Heart right ventricle (tissue), 16 donors: ENCODE measurements at regions of chr6 and their contacts with region 1.

Region 1: DNA sequence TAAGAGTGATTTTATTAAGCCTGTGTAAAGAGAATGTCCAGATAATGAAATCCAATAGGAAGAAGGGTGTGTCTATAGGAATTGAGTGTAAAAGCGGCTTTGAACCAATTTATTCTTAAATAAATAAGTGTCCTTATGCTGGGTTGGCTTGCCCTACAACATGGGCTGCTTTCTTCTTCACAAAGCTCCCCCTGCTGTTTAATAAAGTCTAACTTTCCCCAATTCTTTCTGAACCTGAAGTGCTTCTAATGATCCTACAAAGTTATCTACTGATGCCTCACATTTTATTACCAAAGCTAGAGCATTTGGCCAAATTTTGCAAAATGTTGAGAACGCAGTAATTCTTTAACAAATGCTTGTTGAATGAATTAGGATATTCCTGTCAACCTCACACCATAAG is 36.3 kb upstream of the SIRT5 start:
- DNase-seq: no peak
- ATAC-seq: peak in 7 of 8 donors; percentile 69 to 84 (median 75)
- H3K4me3 ChIP-seq: no peak overlapping the region
- H3K27ac ChIP-seq: peak overlapping the region in 7 of 10 donors; percentile 24 to 71 (median 34)
- H3K4me1 ChIP-seq: peaks cover 0 to 33% (median 12%) of the 10 kb centered on the region in 9 donors
- H3K27me3 ChIP-seq: no peaks in the 10 kb centered on the region
- CTCF ChIP-seq: peak; percentile 28 to 73 (median 59)

Region 2: DNA sequence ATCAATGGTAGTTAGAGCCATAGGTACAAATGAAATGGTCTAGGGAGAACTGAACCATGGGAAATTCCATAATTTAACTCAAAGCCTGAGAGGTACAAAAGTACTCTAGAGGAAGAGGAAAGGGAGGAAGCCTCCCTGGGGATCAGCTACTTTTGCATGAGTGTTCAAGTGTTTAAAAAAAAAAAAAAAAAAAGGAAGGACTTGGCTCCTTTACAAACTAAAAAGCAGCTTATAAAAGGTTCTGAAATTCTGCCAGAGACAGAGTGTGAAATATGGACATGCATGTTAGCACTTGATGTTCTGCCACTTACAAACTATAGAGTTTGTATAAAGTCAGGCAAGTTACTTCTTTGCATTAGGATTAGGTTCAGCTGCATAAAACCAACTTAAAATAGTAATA is 499.8 kb before region 1 on chr6:
- intact Hi-C with region 1: no loop called
- DNase-seq: peak in 1 of 2 donors; percentile 51
- ATAC-seq: peak; percentile 47 to 90 (median 75)
- H3K4me3 ChIP-seq: no peak overlapping the region
- H3K27ac ChIP-seq: peak overlapping the region in 6 of 10 donors; percentile 30 to 66 (median 47)
- H3K4me1 ChIP-seq: peaks cover 0 to 32% (median 24%) of the 10 kb centered on the region in 9 donors
- H3K27me3 ChIP-seq: no peaks in the 10 kb centered on the region
- CTCF ChIP-seq: no peak

Region 3: GRCh38 chr6:13355043-13355951 is 182.8 kb before region 1 on chr6:
- intact Hi-C with region 1: loop called in 1 of 10 experiments (anchors 5 kb)
- DNase-seq: no peak
- ATAC-seq: peak in 5 of 8 donors; percentile 25 to 53 (median 51)
- H3K4me3 ChIP-seq: peak overlapping the region in 1 of 10 donors; percentile 14
- H3K27ac ChIP-seq: peak overlapping the region in 8 of 10 donors; percentile 19 to 78 (median 59)
- H3K4me1 ChIP-seq: peaks cover 3 to 68% (median 48%) of the 10 kb centered on the region in 9 donors
- H3K27me3 ChIP-seq: no peaks in the 10 kb centered on the region
- CTCF ChIP-seq: no peak

Region 4: DNA sequence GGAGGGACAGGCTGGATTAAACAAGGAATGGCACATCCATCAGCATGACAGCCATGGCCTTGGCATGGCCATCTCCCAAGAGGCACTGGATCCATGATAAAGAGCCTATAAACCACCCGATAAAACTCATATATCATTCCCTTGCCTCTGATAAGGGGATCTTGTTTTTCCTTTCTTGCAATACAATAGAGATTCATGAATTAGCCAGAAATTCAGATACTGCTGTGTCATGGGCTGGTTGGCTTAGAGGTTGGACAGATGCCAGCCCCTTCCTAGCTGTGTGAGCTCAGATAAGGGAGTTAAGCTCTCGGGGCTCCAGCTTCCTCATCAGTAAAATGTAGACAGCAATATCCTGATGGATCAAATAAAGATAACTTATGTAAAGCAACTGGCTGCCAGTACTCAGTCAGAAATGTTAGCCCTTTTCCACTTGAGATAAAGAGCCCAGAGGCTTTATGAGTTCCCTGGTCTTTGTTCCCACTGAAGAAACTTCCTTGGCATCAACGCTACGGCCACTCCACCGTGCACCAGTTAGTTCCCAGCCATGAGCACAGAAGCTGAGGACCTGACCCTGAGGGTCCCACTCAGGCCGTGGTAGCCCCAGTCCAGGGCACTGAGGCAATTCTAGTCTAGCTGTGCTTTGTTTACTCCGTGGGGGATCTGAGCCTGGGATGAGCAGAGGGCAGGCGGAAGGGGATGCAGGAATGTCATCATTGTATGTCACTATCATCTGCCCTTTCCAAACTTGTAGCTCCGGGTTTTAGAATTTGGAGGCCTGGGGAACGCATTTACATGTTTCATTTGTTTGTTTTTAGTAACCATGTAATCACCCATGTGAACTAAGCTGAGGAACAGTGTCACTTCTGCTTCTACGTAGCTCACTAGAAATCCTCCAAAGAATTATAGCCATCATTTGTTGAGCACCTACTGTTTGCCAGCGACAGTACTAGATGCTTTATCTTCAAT is 142.5 kb before region 1 on chr6:
- intact Hi-C with region 1: loop called in 1 of 10 experiments (anchors 5 kb)
- DNase-seq: peak; percentile 57 to 85
- ATAC-seq: peak; percentile 68 to 89 (median 78)
- H3K4me3 ChIP-seq: no peak overlapping the region
- H3K27ac ChIP-seq: peak overlapping the region; percentile 26 to 84 (median 77)
- H3K4me1 ChIP-seq: peaks cover 5 to 63% (median 57%) of the 10 kb centered on the region in 9 donors
- H3K27me3 ChIP-seq: no peaks in the 10 kb centered on the region
- CTCF ChIP-seq: no peak

Region 5: GRCh38 chr6:13413900-13414555 is 124.1 kb before region 1 on chr6:
- intact Hi-C with region 1: loop called in 1 of 10 experiments (anchors 5 kb)
- DNase-seq: peak in 1 of 2 donors; percentile 49
- ATAC-seq: peak; percentile 37 to 82 (median 72)
- H3K4me3 ChIP-seq: no peak overlapping the region
- H3K27ac ChIP-seq: peak overlapping the region; percentile 62 to 89 (median 83)
- H3K4me1 ChIP-seq: peaks cover 16 to 99% (median 81%) of the 10 kb centered on the region in 9 donors
- H3K27me3 ChIP-seq: no peaks in the 10 kb centered on the region
- CTCF ChIP-seq: peak in 3 of 9 donors; percentile 19 to 43 (median 42)

Region 6: DNA sequence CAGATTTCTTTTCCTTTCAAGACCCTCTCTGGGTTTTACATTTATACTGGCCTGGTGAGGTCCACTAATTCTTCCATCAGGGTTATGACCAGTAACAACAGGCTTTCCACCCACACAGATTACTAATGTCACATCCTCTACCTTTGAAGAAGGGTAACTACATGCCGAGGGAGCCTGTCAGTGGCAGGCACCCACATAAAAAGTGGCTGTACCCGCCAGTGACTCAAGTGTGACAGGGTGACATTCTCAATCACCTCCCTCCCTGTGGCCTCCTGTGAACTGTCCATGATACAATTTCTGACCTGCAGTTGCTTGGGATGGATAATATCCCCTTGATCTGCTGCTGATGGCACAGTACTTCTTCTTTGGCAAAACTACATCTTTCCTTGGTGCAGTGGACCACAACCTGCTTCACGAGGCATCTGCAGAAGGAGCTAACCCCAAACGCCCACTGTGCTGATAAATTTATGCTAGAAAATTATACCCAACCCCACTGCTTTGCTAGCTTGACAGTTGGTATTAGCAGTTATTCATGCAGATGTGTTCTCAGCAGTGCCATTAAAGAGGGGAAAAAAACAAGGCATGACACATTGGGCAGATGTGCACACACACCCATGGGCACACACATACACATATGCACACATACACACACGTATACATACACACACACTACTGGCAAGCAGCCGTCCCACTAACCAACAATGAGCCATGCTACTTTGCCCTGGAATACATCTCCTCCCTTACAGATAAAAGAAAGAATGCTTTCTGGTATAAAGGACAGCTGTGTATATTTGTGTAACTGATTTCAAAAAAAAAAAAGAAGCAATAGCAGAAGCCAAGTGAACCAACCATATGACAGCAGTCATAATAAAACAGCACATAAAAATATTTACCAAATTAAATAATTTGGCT is 71.5 kb before region 1 on chr6:
- intact Hi-C with region 1: loop called in 1 of 10 experiments (anchors 10 kb)
- DNase-seq: no peak
- ATAC-seq: peak in 1 of 8 donors; percentile 20
- H3K4me3 ChIP-seq: peak overlapping the region in 2 of 10 donors; percentile 9 to 14
- H3K27ac ChIP-seq: peak overlapping the region in 9 of 10 donors; percentile 31 to 80 (median 61)
- H3K4me1 ChIP-seq: peaks cover 9 to 95% (median 84%) of the 10 kb centered on the region in 9 donors
- H3K27me3 ChIP-seq: no peaks in the 10 kb centered on the region
- CTCF ChIP-seq: no peak